ENCODE measurements at regions of chr2 and their contacts with region 1.

Region 1: DNA sequence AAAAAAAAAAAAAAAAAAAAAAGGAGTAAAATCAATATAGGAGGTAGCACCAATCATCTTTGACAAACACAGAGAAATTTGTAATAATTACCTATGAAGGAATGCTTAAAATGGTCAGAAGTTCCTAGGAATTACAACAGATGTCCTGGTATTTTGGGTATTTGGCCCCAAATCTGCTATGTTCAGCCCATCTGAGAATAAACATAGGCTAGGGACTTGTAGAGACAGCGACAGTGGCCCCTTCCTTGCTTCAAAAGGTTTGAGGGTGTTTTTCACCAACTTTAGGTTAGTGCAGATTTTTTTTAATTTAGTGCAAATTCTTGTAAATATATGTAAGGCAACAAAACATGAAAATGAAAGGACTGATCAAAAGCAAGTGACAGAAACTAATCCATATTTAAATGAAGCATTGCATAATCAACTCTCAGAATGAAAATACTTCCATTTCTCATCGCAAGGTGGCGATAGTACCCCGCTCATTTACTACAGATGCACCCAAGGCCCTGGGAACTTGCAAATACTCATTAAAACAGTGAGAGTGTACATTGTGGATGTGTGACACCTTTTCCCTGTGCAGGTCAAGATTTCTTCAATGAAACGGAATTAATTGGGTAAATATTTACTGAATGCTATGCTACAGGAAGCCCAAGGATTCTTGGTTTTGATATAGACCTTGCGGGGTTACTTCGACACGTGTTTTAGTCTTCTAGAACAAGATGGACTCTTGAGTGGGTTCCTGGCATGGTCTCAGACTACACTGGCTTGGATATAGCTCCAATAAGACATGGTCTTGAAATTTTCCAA is 44.6 kb downstream of the FAM124B start:
- DNase-seq: peak; percentile 49 to 85
- H3K4me3 ChIP-seq: no peak overlapping the region
- H3K27ac ChIP-seq: no peak overlapping the region
- H3K4me1 ChIP-seq: no peaks in the 10 kb centered on the region
- H3K27me3 ChIP-seq: no peaks in the 10 kb centered on the region
- CTCF ChIP-seq: peak in 5 of 7 experiments; percentile 58 to 85 (median 78)
- EP300 ChIP-seq: no peak
- POLR2A ChIP-seq: no peak

Region 2: GRCh38 chr2:222982010-222982908 is 1375.0 kb before region 1 on chr2:
- intact Hi-C with region 1: no loop called
- DNase-seq: peak; percentile 56 to 79
- H3K4me3 ChIP-seq: no peak overlapping the region
- H3K27ac ChIP-seq: no peak overlapping the region
- H3K4me1 ChIP-seq: peaks cover 0 to 9% (median 4%) of the 10 kb centered on the region in 4 donors
- H3K27me3 ChIP-seq: no peaks in the 10 kb centered on the region
- CTCF ChIP-seq: peak in 4 of 7 experiments; percentile 30 to 51 (median 45)
- EP300 ChIP-seq: no peak
- POLR2A ChIP-seq: no peak

Region 3: GRCh38 chr2:224242543-224242942 is 114.8 kb before region 1 on chr2:
- intact Hi-C with region 1: no loop called
- DNase-seq: no peak
- H3K4me3 ChIP-seq: no peak overlapping the region
- H3K27ac ChIP-seq: no peak overlapping the region
- H3K4me1 ChIP-seq: no peaks in the 10 kb centered on the region
- H3K27me3 ChIP-seq: peaks cover 0 to 8% (median 0%) of the 10 kb centered on the region in 3 donors
- CTCF ChIP-seq: no peak
- EP300 ChIP-seq: no peak
- POLR2A ChIP-seq: no peak

Region 4: GRCh38 chr2:224650815-224651439 is 293.6 kb after region 1 on chr2:
- intact Hi-C with region 1: loop called (anchors 5 kb)
- DNase-seq: peak in 1 of 2 donors; percentile 76
- H3K4me3 ChIP-seq: no peak overlapping the region
- H3K27ac ChIP-seq: no peak overlapping the region
- H3K4me1 ChIP-seq: peaks cover 0 to 11% (median 0%) of the 10 kb centered on the region in 4 donors
- H3K27me3 ChIP-seq: no peaks in the 10 kb centered on the region
- CTCF ChIP-seq: peak in 5 of 7 experiments; percentile 51 to 71 (median 69)
- EP300 ChIP-seq: no peak
- POLR2A ChIP-seq: no peak

Region 5: GRCh38 chr2:224781400-224781799 is 424.1 kb after region 1 on chr2:
- intact Hi-C with region 1: loop called (anchors 5 kb)
- DNase-seq: no peak
- H3K4me3 ChIP-seq: no peak overlapping the region
- H3K27ac ChIP-seq: no peak overlapping the region
- H3K4me1 ChIP-seq: no peaks in the 10 kb centered on the region
- H3K27me3 ChIP-seq: no peaks in the 10 kb centered on the region
- CTCF ChIP-seq: no peak
- EP300 ChIP-seq: no peak
- POLR2A ChIP-seq: no peak

Measured in stomach (tissue), 19 donors.